ENCODE measurements at regions of chr12 and their contacts with region 1.

Region 1: GRCh38 chr12:117874842-117875434 is 93.9 kb downstream of the KSR2 start:
- DNase-seq: no peak

Region 2: DNA sequence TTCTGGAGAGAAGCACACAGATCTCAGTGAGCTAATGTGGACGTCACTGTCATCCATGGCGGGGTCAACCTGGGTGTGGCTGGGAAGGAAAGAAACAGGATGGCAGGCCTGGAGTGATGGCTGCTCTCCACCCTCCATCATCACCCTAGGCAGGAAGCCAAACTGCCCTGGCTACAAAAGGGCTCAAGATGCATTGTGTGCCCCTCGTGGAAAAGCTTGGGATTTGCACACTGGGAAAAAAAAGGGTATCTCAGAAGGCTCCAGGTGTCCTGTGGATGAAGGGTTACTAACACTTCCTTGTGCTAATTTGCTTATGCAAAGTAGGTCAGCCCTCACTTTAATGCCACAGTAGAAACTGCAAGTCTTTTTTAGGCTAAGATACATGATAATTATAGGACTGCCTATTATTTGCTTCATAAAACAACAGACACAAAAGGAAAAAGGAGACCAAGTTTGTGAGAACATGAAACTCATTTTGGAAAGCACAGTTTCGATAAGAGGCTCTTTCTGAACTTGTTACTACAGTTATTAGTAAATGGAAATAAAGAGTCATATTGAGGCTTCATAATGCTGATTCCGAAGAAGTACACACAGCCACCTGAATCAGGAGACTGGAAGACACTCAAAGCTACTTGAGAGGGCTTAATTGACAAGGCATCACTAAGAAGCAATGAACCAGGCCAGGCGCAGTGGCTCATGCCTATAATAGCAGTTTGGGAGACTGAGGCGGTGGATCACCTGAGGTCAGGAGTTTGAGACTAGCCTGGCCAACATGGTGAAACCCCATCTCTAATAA is 160.5 kb after region 1 on chr12:
- intact Hi-C with region 1: loop called (anchors 10 kb)
- DNase-seq: no peak